OCI-LY7 (cell line): ENCODE measurements at regions of chr11 and their contacts with region 1.

Region 1: DNA sequence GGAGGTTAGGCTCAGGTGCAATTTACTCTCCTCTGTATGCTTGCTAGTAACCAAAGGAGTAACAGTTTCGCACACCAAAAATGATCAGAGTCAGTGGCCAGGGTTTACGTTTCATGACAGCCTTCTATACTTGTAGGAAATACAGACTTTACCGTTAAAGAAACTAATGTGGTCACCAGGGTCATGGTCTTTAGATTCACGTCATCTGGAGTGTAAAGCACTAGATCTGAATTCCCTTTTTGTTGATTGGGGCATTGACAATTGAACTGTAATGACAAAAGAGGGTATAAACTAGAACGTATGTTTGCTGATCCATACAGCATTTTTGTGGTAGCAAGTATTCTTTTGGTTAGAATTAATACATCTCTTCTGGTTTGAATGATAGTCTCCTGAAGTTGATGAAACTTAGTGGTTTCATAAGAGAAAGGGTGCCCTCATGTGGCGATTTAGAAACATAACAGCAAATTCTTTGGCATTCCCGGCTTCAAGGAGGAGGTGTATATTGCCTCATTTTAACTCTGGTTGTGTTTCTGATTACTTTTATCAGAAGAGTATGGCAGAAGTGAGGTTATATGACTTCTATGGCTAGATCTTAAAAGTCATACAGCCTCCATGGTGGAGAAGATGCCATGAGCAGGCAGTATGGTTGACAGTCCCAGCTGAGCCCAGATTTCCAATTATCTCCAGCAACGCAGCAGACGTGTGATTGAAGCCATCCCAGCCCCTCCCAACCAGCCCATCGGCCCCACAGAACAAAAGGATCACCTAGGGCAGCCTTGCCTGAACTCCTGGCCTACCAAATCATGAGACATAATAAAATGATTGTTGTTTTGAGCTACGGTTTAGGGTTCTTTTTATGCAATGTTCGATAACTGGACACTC is 35.1 kb downstream of the MMP7 start:
- DNase-seq: peak; percentile 86
- H3K4me3 ChIP-seq: no peak overlapping the region
- H3K27ac ChIP-seq: no peak overlapping the region
- H3K4me1 ChIP-seq: peaks cover 19% of the 10 kb centered on the region
- CTCF ChIP-seq: peak; percentile 94

Region 2: DNA sequence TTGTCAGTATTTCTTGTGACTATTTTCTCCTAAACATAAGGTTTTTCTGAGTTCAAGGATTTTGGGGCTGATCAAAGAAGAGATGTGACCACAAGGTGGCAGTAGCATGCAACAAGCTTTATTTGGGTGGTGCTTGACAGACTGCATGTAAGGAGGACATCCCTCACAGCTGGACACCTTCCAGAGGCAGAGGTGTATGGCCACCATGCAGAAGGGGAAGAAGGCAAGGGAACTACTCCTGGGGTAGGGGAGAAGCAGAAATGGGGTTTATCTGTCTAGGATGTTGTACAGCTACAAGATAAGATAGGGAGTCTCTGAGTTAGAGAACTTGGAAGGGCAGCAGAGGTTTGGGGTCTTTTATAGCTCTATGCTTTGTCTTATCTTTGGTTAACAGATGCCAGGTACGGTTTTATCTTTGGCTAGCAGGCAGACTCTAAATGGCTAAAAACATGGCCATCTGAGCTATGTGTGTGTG is 153.5 kb before region 1 on chr11:
- CTCF ChIA-PET with region 1: no interaction called
- POLR2A ChIA-PET with region 1: interaction called, 6 read pairs
- intact Hi-C with region 1: loop called (anchors 1 kb)
- DNase-seq: peak; percentile 86
- H3K4me3 ChIP-seq: no peak overlapping the region
- H3K27ac ChIP-seq: no peak overlapping the region
- H3K4me1 ChIP-seq: peaks cover 11% of the 10 kb centered on the region
- CTCF ChIP-seq: peak; percentile 97

Region 3: GRCh38 chr11:102367364-102367763 is 128.0 kb before region 1 on chr11:
- CTCF ChIA-PET with region 1: interaction called, 3 read pairs
- POLR2A ChIA-PET with region 1: interaction called, 5 read pairs
- intact Hi-C with region 1: loop called (anchors 1 kb)
- DNase-seq: peak; percentile 63
- H3K4me3 ChIP-seq: no peak overlapping the region
- H3K27ac ChIP-seq: no peak overlapping the region
- H3K4me1 ChIP-seq: peaks cover 6% of the 10 kb centered on the region
- CTCF ChIP-seq: peak; percentile 77

Region 4: DNA sequence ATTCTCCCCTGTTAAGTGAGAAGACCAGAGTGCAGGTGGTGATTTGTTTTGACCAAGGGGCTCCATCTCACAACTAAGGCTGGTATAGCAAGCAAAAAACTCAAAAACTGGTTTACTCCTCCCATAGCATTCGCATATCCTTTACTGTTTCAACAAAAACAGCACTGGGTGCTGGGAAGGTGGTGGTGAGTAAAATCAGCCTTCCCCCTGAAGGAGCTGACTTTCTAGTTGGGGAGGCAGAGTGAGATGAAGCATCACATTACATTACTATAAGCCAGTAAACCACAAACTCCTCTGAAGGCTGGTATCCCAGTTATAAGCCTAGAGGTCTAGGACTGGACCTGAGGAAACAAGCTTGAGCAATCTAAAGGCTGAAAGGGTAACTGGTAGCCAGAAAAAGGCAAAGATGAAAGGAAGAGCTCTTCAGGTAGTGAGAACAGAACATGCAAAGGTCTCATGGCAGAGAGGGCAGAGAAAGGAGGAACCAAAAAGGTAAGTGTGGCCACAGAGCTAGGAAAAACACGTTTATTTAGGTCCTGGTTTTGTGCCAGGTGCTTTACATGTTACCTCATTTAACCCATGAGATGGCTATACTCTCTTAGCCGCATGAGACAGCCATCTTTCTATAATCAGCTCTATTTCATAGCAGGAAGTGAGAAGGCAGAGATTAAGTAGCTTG is 65.1 kb before region 1 on chr11:
- CTCF ChIA-PET with region 1: no interaction called
- POLR2A ChIA-PET with region 1: no interaction called
- intact Hi-C with region 1: loop called (anchors 1 kb)
- DNase-seq: peak; percentile 95
- H3K4me3 ChIP-seq: peak overlapping the region; percentile 51
- H3K27ac ChIP-seq: peak overlapping the region; percentile 98
- H3K4me1 ChIP-seq: peaks cover 66% of the 10 kb centered on the region
- CTCF ChIP-seq: 0 out of 2 replicates have a peak, but pooled peaks have one; percentile 39

Region 5: GRCh38 chr11:102476812-102477211 is 18.6 kb before region 1 on chr11:
- CTCF ChIA-PET with region 1: no interaction called
- POLR2A ChIA-PET with region 1: interaction called, 12 read pairs
- intact Hi-C with region 1: no loop called
- DNase-seq: peak; percentile 79
- H3K4me3 ChIP-seq: no peak overlapping the region
- H3K27ac ChIP-seq: peak overlapping the region; percentile 81
- H3K4me1 ChIP-seq: peaks cover 60% of the 10 kb centered on the region
- CTCF ChIP-seq: no peak

Region 6: GRCh38 chr11:102666331-102666957 is 171.0 kb after region 1 on chr11:
- CTCF ChIA-PET with region 1: no interaction called
- POLR2A ChIA-PET with region 1: no interaction called
- intact Hi-C with region 1: loop called (anchors 5 kb)
- DNase-seq: peak; percentile 56
- H3K4me3 ChIP-seq: no peak overlapping the region
- H3K27ac ChIP-seq: no peak overlapping the region
- H3K4me1 ChIP-seq: no peaks in the 10 kb centered on the region
- CTCF ChIP-seq: peak; percentile 98